ENCODE measurements at regions of chr17 and their contacts with region 1.

Region 1: GRCh38 chr17:59521204-59522126 is 43.9 kb upstream of the DHX40 start:
- DNase-seq: peak; percentile 52 to 72 (median 57)
- H3K4me3 ChIP-seq: no peak overlapping the region
- H3K27ac ChIP-seq: no peak overlapping the region
- H3K4me1 ChIP-seq: peaks cover 0 to 5% (median 0%) of the 10 kb centered on the region in 4 experiments
- H3K27me3 ChIP-seq: peaks cover 0 to 2% (median 0%) of the 10 kb centered on the region in 5 experiments

Region 2: DNA sequence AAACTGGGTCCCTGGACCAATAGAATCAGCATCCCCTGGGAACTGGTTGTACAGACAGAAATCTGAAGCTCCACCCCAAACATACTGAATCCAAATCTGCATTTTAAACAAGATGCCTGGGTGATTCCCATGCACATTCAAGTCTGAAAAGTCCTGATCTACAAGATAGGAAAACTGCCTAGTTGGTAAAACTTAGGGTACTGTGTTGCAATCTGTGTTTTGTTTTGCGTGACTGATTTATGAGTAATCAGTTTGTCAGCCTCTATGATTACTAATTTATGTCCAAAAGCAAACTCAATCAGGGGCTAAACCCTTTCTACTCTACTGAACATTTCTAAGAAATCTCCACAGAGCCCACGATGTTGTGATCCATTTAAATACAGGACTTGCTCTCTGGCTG is 86.2 kb before region 1 on chr17:
- CTCF ChIA-PET with region 1: no interaction called
- POLR2A ChIA-PET with region 1: no interaction called
- DNase-seq: no peak
- H3K4me3 ChIP-seq: no peak overlapping the region
- H3K27ac ChIP-seq: no peak overlapping the region
- H3K4me1 ChIP-seq: peaks cover 7 to 31% (median 20%) of the 10 kb centered on the region in 4 experiments
- H3K27me3 ChIP-seq: peaks cover 0 to 3% (median 0%) of the 10 kb centered on the region in 5 experiments

Region 3: DNA sequence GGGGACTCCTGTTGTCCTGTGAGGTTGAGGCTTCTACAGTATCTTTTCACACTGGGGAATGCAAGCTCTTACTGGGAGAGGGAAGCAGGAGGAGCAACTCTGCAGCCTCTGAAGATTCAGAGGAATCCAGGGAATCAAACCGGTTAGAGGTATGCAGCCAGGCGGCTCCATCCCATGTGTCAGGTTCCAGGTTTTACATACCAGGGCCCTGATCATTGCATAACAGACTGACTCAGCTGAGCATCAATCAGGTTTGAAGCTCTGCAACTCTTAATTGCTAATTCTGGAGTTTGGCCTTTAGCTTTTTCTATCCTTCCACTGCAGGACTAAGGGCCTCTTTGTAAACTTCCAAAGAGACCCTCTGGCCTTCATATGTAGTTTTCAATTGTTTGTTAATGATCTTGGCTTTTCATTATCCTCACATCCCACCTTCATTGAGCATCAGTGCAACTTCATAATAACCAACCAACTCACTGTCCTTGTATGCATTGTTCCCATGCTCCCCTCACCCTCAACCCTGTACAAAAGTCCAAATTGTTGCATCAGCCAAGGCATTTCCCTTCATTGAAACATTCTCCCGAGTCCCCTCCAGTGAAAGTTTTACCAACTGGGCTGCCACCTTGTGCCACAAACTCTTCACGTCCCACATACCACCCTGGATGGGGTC is 15.7 kb before region 1 on chr17:
- CTCF ChIA-PET with region 1: no interaction called
- POLR2A ChIA-PET with region 1: no interaction called
- DNase-seq: no peak
- H3K4me3 ChIP-seq: no peak overlapping the region
- H3K27ac ChIP-seq: no peak overlapping the region
- H3K4me1 ChIP-seq: peaks cover 0 to 3% (median 0%) of the 10 kb centered on the region in 4 experiments
- H3K27me3 ChIP-seq: no peaks in the 10 kb centered on the region

Region 4: GRCh38 chr17:59561042-59561441 is 39.6 kb after region 1 on chr17:
- CTCF ChIA-PET with region 1: interaction called, 34 read pairs
- POLR2A ChIA-PET with region 1: no interaction called
- DNase-seq: peak; percentile 38 to 67 (median 66)
- H3K4me3 ChIP-seq: no peak overlapping the region
- H3K27ac ChIP-seq: no peak overlapping the region
- H3K4me1 ChIP-seq: peaks cover 1 to 4% (median 1%) of the 10 kb centered on the region in 4 experiments
- H3K27me3 ChIP-seq: no peaks in the 10 kb centered on the region